H1 (cell line): ENCODE measurements at regions of chr6 and their contacts with region 1.

Region 1: GRCh38 chr6:43286980-43287716 is 10.9 kb upstream of the SLC22A7 start:
- DNase-seq: no peak
- H3K4me3 ChIP-seq: no peak overlapping the region
- H3K27ac ChIP-seq: no peak overlapping the region
- H3K4me1 ChIP-seq: peaks cover 0 to 14% (median 9%) of the 10 kb centered on the region in 4 experiments; a peak in 5 of 7 replicates
- H3K27me3 ChIP-seq: peaks cover 0 to 28% (median 19%) of the 10 kb centered on the region in 4 experiments; a peak in 5 of 7 replicates
- CTCF ChIP-seq: peak in 2 of 3 experiments; percentile 63 to 67; a peak in 3 of 4 replicates
- EP300 ChIP-seq: no peak
- POLR2A ChIP-seq: no peak
- RAD21 ChIP-seq: peak; percentile 57 to 68

Region 2: GRCh38 chr6:43221046-43221972 is 65.8 kb before region 1 on chr6:
- CTCF ChIA-PET with region 1: interaction called, 10 read pairs
- POLR2A ChIA-PET with region 1: no interaction called
- DNase-seq: no peak
- H3K4me3 ChIP-seq: no peak overlapping the region
- H3K27ac ChIP-seq: no peak overlapping the region
- H3K4me1 ChIP-seq: peaks cover 0 to 4% (median 0%) of the 10 kb centered on the region in 4 experiments; a peak in 1 of 7 replicates
- H3K27me3 ChIP-seq: no peaks in the 10 kb centered on the region
- CTCF ChIP-seq: no peak
- EP300 ChIP-seq: no peak
- POLR2A ChIP-seq: no peak
- RAD21 ChIP-seq: no peak

Region 3: DNA sequence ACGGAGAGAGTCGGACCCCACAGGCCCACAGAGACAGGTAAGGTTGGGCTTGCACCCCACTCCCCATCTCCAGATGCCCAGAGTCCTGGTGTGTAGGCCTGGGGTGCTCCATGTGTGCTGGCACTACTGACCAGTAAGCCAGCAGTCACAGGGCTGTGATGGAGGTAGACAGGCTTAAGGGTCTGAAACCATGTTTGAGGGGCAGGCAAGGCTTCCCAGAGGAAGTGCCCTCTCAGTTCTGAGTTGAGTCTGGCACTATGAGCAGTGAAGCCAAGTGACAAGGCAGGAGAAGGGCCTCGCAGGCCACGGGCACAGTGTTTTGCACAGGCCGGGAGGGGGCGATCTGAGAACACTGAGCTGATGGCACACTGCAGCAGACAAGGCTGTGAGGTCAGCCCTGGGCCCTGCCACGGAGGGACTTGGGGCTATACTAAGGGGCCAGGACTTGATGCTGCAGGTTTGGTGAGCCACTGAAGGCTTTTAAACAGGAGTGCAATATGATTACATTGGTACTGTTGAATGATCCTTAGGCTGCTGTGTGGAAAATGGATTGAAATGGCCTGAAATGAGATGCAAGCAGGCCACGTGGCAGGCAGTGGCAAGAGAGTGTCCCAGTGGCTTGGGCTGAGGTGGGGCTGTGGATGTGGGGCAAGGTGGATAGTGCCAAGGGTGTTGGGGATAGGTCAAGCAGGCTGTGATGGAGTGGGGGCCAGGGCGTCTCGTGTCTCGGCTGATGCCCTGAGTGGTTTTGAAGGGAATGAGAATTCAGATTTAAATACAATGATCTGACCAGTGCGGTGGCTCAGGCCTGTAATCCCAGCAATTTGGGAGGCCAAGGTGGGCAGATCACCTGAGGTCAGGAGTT is 23.6 kb before region 1 on chr6:
- CTCF ChIA-PET with region 1: interaction called, 24 read pairs
- POLR2A ChIA-PET with region 1: interaction called, 5 read pairs
- DNase-seq: peak; percentile 49 to 90
- H3K4me3 ChIP-seq: no peak overlapping the region
- H3K27ac ChIP-seq: no peak overlapping the region
- H3K4me1 ChIP-seq: peaks cover 0 to 15% (median 5%) of the 10 kb centered on the region in 4 experiments; a peak in 6 of 7 replicates
- H3K27me3 ChIP-seq: peaks cover 2 to 9% (median 7%) of the 10 kb centered on the region in 4 experiments
- CTCF ChIP-seq: peak in 2 of 3 experiments; percentile 91 to 98; a peak in 3 of 4 replicates
- EP300 ChIP-seq: no peak
- POLR2A ChIP-seq: no peak
- RAD21 ChIP-seq: peak; percentile 96 to 97

Region 4: DNA sequence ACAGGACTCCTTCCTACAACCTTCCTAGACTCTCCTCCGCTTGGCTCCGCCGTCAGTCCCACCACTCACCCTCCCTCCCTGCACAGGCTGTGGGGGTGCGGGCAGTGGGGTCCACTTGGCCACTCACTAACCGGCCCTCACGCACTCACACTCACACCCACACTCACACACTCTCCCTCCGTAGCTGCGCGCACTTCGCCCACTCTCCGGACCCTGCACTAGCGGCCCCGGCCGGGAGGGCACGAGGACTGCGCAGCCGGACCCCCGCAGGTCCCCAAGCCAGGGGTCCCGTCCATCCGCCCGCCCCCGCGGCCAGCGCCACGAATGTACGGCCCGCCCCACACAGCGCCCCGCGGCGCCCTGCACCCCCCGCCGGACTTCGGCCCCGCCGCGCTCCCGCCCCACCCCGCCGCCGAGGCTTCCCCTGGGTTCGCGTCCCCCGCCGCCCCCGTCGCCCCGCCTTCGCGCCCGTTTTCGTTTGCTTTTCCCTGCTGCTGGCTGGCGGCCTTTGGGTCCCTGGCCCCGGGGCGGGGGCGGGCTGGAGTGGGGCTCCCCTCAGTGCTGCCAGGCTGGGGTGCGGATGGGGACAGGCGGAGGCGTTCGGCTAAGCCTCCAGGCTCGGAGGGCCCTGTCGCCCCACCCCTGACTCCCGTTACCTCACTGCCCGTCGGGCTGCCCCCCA is 12.1 kb before region 1 on chr6:
- CTCF ChIA-PET with region 1: interaction called, 24 read pairs
- POLR2A ChIA-PET with region 1: interaction called, 5 read pairs
- DNase-seq: no peak
- H3K4me3 ChIP-seq: peak overlapping the region; percentile 28 to 66 (median 46)
- H3K27ac ChIP-seq: no peak overlapping the region
- H3K4me1 ChIP-seq: peaks cover 4 to 34% (median 26%) of the 10 kb centered on the region in 4 experiments
- H3K27me3 ChIP-seq: peaks cover 12 to 48% (median 37%) of the 10 kb centered on the region in 4 experiments
- CTCF ChIP-seq: no peak
- EP300 ChIP-seq: no peak
- POLR2A ChIP-seq: no peak
- RAD21 ChIP-seq: no peak

Region 5: GRCh38 chr6:43308101-43308989 is 21.2 kb after region 1 on chr6 and contains the start of gene CRIP3:
- CTCF ChIA-PET with region 1: interaction called, 23 read pairs
- POLR2A ChIA-PET with region 1: interaction called, 7 read pairs
- DNase-seq: peak; percentile 60 to 86
- H3K4me3 ChIP-seq: peak within 1 kb of the TSS; percentile 51 to 74 (median 66)
- H3K27ac ChIP-seq: no peak within 1 kb of the TSS
- H3K4me1 ChIP-seq: peaks cover 9 to 15% (median 9%) of the 10 kb centered on the region in 4 experiments
- H3K27me3 ChIP-seq: 0 out of 7 replicates have a peak, but pooled peaks cover 0 to 2% (median 0%) of the 10 kb centered on the region in 4 experiments
- CTCF ChIP-seq: peak in 2 of 3 experiments; percentile 51 to 76; a peak in 2 of 4 replicates
- EP300 ChIP-seq: no peak
- POLR2A ChIP-seq: peak in 1 of 2 experiments; percentile 57; a peak in 2 of 3 replicates
- RAD21 ChIP-seq: peak; percentile 31 to 48; a peak in 3 of 4 replicates
- total RNA-seq, gene CRIP3: 37.6 and 46.3 TPM in 2 replicates

Region 6: DNA sequence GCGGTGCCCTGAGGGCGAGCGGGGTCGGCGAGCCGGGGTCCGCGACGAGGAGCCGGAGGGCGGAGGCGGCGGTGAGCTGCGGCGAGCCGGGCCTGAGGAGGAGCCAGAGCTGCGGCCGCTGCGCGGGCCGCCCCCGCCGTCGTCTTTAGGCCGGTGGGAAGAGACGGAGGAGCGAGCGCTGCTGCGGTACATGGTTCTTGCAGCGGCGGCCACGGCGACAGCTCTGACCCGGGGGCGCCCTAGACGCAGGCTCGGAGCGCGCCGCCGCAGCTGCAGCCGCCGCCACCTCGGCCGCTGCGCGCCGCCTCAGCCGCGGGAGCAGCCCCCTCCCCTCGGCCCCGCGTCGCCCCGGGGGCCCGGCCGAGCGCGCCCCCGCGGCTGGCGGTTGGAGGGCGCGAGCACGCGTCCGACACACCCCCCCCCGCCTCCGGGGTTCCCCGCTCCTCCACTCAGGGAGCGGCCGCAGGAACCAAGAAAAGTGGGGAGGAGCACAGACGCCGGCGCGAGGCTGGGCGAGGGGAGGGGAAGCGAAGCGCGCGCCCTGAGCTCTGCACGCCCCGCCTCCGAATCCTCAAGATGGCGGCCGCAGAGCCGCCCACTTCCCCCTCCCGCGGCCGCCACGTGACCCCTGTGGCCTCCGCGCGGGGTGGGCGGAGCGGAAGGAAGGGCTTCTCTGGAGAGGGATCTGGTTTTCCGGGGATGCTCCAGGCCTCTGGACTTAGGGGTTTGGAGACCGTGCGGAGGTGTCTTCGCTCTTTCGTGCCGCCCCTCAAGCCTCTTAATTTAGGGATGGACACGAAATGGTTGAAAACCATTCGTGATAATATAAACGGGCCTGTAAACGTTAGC is 82.2 kb after region 1 on chr6 and contains the start of gene ZNF318:
- CTCF ChIA-PET with region 1: no interaction called
- POLR2A ChIA-PET with region 1: no interaction called
- DNase-seq: peak; percentile 91 to 92
- H3K4me3 ChIP-seq: peak within 1 kb of the TSS; percentile 64 to 86 (median 80)
- H3K27ac ChIP-seq: peak within 1 kb of the TSS; percentile 46; the same call in 1 of the 2 replicates
- H3K4me1 ChIP-seq: peaks cover 4 to 9% (median 5%) of the 10 kb centered on the region in 4 experiments; a peak in 6 of 7 replicates
- H3K27me3 ChIP-seq: peaks cover 2 to 12% (median 8%) of the 10 kb centered on the region in 4 experiments; a peak in 6 of 7 replicates
- CTCF ChIP-seq: no peak
- EP300 ChIP-seq: no peak
- POLR2A ChIP-seq: peak in 1 of 2 experiments; percentile 44; a peak in 1 of 3 replicates
- RAD21 ChIP-seq: no peak
- total RNA-seq, gene ZNF318: 22.1 and 22.3 TPM in 2 replicates

Region 7: GRCh38 chr6:43383021-43383667 is 96.0 kb after region 1 on chr6:
- CTCF ChIA-PET with region 1: no interaction called
- POLR2A ChIA-PET with region 1: no interaction called
- DNase-seq: no peak
- H3K4me3 ChIP-seq: no peak overlapping the region
- H3K27ac ChIP-seq: no peak overlapping the region
- H3K4me1 ChIP-seq: no peaks in the 10 kb centered on the region
- H3K27me3 ChIP-seq: no peaks in the 10 kb centered on the region
- CTCF ChIP-seq: no peak
- EP300 ChIP-seq: no peak
- POLR2A ChIP-seq: no peak
- RAD21 ChIP-seq: no peak

Region 8: DNA sequence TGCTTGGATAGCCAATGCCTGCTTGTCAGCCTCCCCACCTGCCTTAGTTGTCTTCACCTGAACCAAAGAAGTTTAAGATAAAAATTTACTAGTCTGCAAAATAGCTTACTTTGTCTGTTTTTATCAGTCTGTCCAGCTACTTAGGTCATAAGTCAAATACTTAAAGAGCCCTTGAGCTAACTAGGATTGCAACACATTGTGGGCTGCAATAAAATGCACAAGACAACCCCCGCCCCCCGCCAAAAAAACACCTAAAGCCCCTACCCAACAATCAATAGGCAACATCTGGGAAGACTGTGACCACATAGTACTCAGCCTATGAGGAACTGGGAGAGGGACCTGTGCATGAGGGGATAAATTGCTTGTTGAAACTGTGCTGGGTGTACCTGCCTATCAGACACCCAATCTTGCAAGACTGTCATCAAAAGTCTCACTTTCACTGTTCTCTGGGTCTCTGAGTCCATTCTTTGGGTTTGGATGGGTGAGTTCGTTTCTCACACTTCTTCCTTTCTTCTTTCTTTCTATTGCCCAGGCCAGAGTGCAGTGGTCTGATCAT is 112.9 kb after region 1 on chr6:
- CTCF ChIA-PET with region 1: interaction called, 10 read pairs
- POLR2A ChIA-PET with region 1: no interaction called
- DNase-seq: no peak
- H3K4me3 ChIP-seq: no peak overlapping the region
- H3K27ac ChIP-seq: no peak overlapping the region
- H3K4me1 ChIP-seq: no peaks in the 10 kb centered on the region; a peak in 2 of 7 replicates
- H3K27me3 ChIP-seq: no peaks in the 10 kb centered on the region
- CTCF ChIP-seq: no peak
- EP300 ChIP-seq: no peak
- POLR2A ChIP-seq: no peak
- RAD21 ChIP-seq: no peak